ENCODE measurements at regions of chr2 and their contacts with region 1.

Region 1: DNA sequence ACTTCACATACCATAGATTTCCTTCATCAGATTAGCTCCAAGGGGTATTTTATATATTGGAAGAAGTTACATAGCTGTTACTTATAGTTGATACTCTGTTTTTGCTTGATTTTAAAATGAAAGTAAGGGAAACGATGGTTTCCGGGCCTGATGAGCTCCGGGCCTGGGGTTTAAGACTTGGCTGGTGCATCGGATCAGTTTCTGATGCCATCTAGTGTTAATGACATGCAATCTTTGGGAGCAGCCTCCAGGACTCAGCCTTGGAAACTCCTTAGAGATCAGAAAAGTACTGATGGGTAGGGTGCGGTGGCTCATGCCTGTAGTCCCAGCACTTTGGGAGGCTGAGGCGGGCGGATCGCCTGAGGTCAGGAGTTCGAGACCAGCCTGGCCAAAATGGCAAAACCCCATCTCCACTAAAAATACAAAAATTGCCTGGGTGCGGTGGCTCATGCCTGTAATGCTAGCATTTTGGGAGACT is 47.1 kb upstream of the CNOT11 start:
- DNase-seq: peak; percentile 64
- H3K4me3 Mint-ChIP-seq: peak overlapping the region; percentile 29
- H3K27ac Mint-ChIP-seq: peak overlapping the region; percentile 63
- H3K4me1 Mint-ChIP-seq: peaks cover 16% of the 10 kb centered on the region
- H3K27me3 Mint-ChIP-seq: peaks cover 12% of the 10 kb centered on the region

Region 2: DNA sequence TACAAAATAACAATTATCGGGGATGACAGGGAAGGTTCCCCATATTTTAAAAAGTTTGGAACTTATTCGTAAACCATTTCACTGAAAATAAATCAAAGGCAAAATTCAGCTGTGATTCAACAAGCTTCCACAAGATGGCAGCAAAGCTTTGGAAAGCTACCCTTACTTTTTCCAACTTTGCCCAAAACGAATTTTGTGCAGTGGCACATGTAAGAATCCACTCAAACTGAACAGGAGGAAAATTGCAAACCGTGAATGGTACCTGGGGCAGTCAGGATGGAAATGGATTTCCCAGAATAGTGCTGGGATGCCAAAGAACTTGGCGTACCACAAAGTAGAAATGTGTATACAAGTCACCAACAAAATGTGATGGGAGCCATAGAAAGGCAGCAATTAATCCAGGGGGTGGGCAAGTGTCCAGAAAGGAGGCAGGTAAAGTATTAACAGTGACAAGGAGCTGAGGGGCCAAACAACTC is 192.8 kb before region 1 on chr2:
- CTCF ChIA-PET with region 1: interaction called, 24 read pairs
- DNase-seq: peak; percentile 53
- H3K4me3 Mint-ChIP-seq: no peak overlapping the region
- H3K27ac Mint-ChIP-seq: no peak overlapping the region
- H3K4me1 Mint-ChIP-seq: peaks cover 4% of the 10 kb centered on the region
- H3K27me3 Mint-ChIP-seq: no peaks in the 10 kb centered on the region

Region 3: GRCh38 chr2:101036562-101037457 is 168.8 kb before region 1 on chr2:
- CTCF ChIA-PET with region 1: interaction called, 47 read pairs
- DNase-seq: no peak
- H3K4me3 Mint-ChIP-seq: no peak overlapping the region
- H3K27ac Mint-ChIP-seq: no peak overlapping the region
- H3K4me1 Mint-ChIP-seq: no peaks in the 10 kb centered on the region
- H3K27me3 Mint-ChIP-seq: peaks cover 5% of the 10 kb centered on the region

Region 4: DNA sequence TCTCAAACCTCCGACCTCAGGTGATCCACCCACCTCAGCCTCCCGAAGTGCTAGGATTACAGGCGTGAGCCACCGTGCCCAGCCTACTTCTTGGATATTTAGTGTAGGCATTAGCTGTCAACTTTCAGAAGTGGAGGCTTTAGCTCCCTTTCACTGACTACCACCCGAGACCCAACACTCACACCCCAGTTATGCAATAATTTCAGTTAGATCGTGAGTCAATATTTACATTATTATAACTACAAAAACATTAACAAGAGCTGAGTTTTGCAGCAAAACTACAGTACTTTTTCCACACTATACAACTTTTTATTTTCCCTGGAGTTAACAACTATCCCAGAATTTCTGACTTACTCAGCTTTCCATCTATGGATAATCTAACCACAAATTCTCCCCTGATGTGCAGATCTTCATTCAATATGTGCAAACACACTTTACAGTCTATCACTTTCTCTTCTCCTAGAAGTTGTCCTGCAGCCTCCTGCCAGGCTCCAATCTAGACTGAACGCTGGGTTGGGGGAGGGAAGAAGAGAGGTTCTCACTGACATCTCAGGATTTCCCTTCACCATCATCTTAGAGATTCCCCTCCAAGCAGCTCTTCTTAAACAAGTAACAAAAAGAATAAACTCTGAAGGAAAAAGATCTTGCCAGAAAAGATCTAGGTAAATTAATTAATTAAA is 64.4 kb before region 1 on chr2:
- CTCF ChIA-PET with region 1: no interaction called
- DNase-seq: no peak
- H3K4me3 Mint-ChIP-seq: no peak overlapping the region
- H3K27ac Mint-ChIP-seq: no peak overlapping the region
- H3K4me1 Mint-ChIP-seq: no peaks in the 10 kb centered on the region
- H3K27me3 Mint-ChIP-seq: peaks cover 34% of the 10 kb centered on the region

Region 5: GRCh38 chr2:101190747-101191516 is 14.6 kb before region 1 on chr2:
- CTCF ChIA-PET with region 1: interaction called, 25 read pairs
- DNase-seq: no peak
- H3K4me3 Mint-ChIP-seq: no peak overlapping the region
- H3K27ac Mint-ChIP-seq: no peak overlapping the region
- H3K4me1 Mint-ChIP-seq: no peaks in the 10 kb centered on the region
- H3K27me3 Mint-ChIP-seq: peaks cover 17% of the 10 kb centered on the region